ENCODE measurements at regions of chr6 and their contacts with region 1.

Region 1: DNA sequence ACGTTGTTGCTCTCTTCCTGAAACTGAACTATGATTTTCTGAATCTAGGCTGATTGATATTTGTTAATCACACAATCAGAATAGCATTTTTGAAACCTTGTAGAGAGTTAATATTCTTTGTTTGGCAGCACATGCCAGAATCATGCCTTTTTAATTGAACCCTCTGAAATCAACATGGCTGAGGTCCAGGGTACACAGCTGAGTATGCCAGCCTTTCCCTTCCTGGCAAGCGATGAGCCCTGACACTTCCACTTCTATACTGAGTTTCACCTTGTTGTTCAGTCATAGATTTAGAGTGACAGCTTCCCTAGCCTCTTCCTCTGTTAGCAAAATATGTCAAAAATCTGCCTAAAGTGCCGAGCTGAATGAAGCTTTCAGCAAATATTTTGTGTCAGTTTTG is 6.8 kb downstream of the HDDC2 start:
- DNase-seq: no peak
- ATAC-seq: no peak

Region 2: DNA sequence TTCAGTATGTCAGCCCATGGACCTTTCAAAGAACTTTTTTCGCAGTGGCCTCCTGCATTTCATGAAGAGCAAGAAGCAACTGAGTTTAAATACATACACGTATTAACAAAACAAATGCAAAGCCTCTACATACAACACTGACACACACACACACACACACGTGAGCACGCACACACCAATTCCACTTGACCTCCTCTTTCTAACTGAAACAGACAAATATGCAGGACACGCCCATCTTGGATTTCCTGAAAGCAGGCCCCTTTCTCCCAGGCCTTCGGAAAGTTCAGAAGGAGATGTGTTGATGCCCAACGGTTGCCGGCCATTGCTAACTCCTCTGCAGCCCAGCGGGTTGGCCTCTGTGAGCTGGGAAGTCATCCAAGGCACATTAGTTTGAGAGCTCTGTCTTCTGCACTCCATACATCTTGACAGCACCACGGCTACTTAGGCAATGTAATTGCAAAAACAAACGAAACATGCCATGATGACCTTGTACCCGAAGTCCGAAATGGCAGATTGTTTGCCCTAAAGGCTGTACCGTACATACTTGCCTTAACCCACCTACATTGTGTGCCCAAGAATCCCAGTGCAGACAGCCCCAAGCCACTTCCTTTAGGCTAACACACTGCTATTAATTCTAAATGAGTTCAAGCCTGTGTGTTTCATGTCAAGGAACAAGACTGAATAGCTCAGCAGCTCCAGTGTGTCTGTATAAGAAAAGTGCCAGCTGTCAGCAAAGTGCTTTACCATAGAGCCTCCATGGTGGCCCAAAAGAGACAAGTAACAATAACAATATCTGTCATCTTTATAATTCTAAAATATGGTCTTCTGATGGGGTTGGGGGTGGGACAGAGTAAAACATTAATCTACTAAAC is 471.4 kb before region 1 on chr6:
- intact Hi-C with region 1: no loop called
- DNase-seq: no peak
- ATAC-seq: no peak

Region 3: GRCh38 chr6:125154757-125155135 is 140.2 kb before region 1 on chr6:
- intact Hi-C with region 1: loop called in 1 of 2 experiments (anchors 5 kb)
- DNase-seq: peak; percentile 40 to 53
- ATAC-seq: peak; percentile 56

Region 4: DNA sequence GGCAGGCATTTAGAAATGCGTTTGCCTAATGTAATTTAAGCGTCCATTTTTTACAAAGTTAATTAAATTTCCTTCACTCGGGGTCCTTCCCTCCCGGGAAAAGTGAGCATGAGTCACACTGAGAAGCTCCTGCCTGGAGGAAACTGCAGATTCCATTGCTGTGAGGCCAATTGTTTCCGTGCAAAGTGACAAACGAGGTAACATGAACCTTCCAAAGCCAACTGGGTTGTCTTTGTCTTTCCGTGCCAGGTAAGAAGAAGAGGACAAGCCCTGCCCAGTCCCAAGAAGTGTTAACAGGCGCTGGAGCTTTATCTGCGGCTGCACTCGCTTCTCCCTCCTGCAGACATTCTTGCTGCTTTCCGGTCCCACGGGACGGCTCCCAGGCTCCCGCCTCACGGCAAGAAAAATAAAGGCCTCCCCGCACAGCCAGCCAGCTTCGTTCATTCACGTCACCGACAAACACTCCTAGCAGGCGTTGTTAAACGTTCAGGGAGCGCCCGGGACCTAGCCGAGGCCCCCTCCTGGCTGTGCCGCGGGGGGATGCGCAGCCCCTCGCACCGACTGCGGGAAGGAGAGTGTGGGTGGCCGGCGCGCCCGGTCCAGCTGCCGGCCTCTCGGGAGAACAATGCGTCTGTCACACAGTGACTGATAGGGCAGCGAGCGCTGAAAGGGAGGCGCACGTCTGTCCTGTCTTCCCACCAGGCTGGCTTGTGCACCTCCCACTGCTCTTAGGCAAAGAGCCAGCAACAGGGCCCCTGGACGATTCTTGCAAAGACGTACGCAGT is 68.3 kb after region 1 on chr6:
- intact Hi-C with region 1: no loop called
- DNase-seq: peak; percentile 13 to 37
- ATAC-seq: peak; percentile 22

Region 5: GRCh38 chr6:125611573-125612344 is 316.8 kb after region 1 on chr6:
- intact Hi-C with region 1: no loop called
- DNase-seq: no peak
- ATAC-seq: no peak

Measured in left colon (tissue), 2 donors.